Activated B cell treated with CpG ODN at 0.5 μM for 24 hours (primary cell): ENCODE measurements at regions of chr4 and their contacts with region 1.

Region 1: DNA sequence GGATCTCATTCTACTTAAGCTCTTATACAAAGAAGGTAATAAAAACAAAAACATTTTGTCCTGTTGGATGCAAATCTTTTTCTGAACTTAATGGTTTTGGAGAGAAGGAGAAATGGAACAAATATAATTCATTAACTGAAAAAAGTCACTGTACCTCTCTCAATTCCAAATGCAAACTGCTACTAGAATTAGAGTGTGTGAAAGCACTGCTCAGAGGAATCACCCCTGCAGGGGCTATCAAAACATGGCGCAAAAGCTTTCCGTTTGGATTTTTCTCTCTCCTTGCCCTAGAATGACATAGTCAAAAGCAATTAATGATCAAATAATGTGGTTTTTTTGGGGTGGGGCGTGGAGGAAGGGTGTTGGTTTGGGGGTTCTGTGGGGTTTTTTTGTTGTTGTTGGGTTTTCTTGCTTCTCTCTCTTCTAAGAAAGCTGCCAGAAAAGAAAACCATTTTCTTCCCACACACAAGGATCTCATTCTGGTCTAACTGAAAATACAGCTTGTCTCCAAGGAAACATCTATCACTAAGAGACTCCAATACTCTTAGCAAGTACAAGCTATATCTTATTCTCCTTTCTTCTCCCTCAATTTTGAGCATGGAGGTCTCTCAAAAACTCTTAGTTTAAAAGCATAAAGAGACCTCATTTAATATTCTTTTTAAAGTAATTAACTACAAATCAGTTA is 41.6 kb downstream of the USP46 start:
- DNase-seq: no peak
- ATAC-seq: no peak
- H3K4me3 Mint-ChIP-seq: no peak overlapping the region
- H3K27ac Mint-ChIP-seq: no peak overlapping the region
- H3K4me1 Mint-ChIP-seq: no peaks in the 10 kb centered on the region
- H3K27me3 Mint-ChIP-seq: no peaks in the 10 kb centered on the region
- CTCF ChIP-seq: no peak

Region 2: DNA sequence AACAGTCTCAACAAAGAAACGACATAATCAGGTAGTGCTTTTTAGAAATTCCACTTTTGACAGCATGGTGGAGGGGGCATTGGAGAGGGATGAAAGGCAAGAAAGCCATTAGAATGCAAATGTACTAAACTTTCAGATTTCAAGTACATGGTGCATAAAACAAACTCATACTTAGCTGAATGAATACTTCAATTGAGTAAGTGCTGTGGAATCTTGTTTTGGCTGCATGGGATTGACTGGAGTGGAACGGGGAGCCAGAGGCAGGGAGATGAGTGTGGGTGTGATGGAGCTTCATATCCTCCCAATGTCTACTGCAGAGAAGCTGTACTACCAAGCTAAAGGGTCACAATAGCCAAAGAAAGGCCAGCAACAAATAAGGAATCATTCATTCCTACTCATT is 10.8 kb before region 1 on chr4:
- CTCF ChIA-PET with region 1: no interaction called
- POLR2A ChIA-PET with region 1: no interaction called
- intact Hi-C with region 1: no loop called
- DNase-seq: no peak
- ATAC-seq: no peak
- H3K4me3 Mint-ChIP-seq: no peak overlapping the region
- H3K27ac Mint-ChIP-seq: no peak overlapping the region
- H3K4me1 Mint-ChIP-seq: no peaks in the 10 kb centered on the region
- H3K27me3 Mint-ChIP-seq: no peaks in the 10 kb centered on the region
- CTCF ChIP-seq: no peak

Region 3: GRCh38 chr4:52643785-52644244 is 26.3 kb after region 1 on chr4:
- CTCF ChIA-PET with region 1: no interaction called
- POLR2A ChIA-PET with region 1: interaction called, 13 read pairs
- intact Hi-C with region 1: no loop called
- DNase-seq: no peak
- ATAC-seq: no peak
- H3K4me3 Mint-ChIP-seq: no peak overlapping the region
- H3K27ac Mint-ChIP-seq: no peak overlapping the region
- H3K4me1 Mint-ChIP-seq: peaks cover 45% of the 10 kb centered on the region
- H3K27me3 Mint-ChIP-seq: no peaks in the 10 kb centered on the region
- CTCF ChIP-seq: no peak

Region 4: DNA sequence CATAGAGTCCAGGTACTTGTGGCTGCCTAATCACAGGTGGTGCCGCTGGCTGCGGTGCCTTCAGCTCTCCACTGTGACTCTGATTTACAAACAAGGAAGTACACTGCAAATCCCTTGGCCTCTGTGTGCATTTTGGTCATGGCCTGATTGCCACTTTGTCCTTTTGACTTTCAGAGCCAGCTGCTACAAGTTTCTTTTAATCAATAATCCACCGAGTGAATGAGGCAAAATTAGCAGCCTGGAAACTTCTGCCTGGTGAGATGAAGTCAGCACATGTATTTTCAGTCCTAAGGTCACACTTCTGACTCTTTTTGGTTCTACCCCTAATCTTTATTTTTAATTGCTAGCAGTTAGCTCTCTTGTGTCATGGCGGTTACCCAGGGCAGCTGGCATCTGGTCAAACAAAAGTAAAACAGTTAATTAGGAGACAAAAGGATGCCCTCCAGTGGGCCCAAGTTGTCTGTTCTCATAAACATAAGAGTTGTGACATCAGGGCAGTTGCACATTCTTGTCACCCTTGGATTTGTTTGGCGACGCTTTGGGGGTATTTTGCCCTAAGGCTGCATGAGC is 1036.1 kb after region 1 on chr4:
- CTCF ChIA-PET with region 1: no interaction called
- POLR2A ChIA-PET with region 1: no interaction called
- intact Hi-C with region 1: no loop called
- DNase-seq: no peak
- ATAC-seq: peak; percentile 31
- H3K4me3 Mint-ChIP-seq: no peak overlapping the region
- H3K27ac Mint-ChIP-seq: peak overlapping the region; percentile 57
- H3K4me1 Mint-ChIP-seq: peaks cover 4% of the 10 kb centered on the region
- H3K27me3 Mint-ChIP-seq: peaks cover 10% of the 10 kb centered on the region
- CTCF ChIP-seq: no peak